ENCODE measurements at regions of chr17 and their contacts with region 1.

Region 1: GRCh38 chr17:77372444-77373298 is 231.9 kb downstream of the SEC14L1 start:
- DNase-seq: peak; percentile 36 to 74 (median 60)
- ATAC-seq: peak; percentile 26 to 32
- H3K4me3 Mint-ChIP-seq: peak overlapping the region; percentile 73 to 92 (median 84)
- H3K27ac Mint-ChIP-seq: peak overlapping the region; percentile 74 to 92 (median 87)
- H3K4me1 Mint-ChIP-seq: peaks cover 50 to 77% (median 61%) of the 10 kb centered on the region in 4 donors
- H3K27me3 Mint-ChIP-seq: peaks cover 0 to 1% (median 0%) of the 10 kb centered on the region in 5 donors

Region 2: GRCh38 chr17:77280980-77281903 is 91.4 kb before region 1 on chr17:
- POLR2A ChIA-PET with region 1: no interaction called
- DNase-seq: peak; percentile 54 to 77 (median 71)
- ATAC-seq: peak; percentile 95 to 96
- H3K4me3 Mint-ChIP-seq: peak overlapping the region; percentile 67 to 84 (median 78)
- H3K27ac Mint-ChIP-seq: peak overlapping the region in 7 of 10 donors; percentile 35 to 99 (median 77)
- H3K4me1 Mint-ChIP-seq: peaks cover 12 to 25% (median 16%) of the 10 kb centered on the region in 4 donors
- H3K27me3 Mint-ChIP-seq: peaks cover 0 to 16% (median 8%) of the 10 kb centered on the region in 5 donors

Region 3: GRCh38 chr17:77331301-77331864 is 41.3 kb before region 1 on chr17:
- POLR2A ChIA-PET with region 1: interaction called, 70 read pairs
- DNase-seq: peak; percentile 88 to 97 (median 95)
- ATAC-seq: peak; percentile 80 to 89
- H3K4me3 Mint-ChIP-seq: peak overlapping the region; percentile 71 to 90 (median 84)
- H3K27ac Mint-ChIP-seq: peak overlapping the region; percentile 84 to 97 (median 91)
- H3K4me1 Mint-ChIP-seq: peaks cover 23 to 52% (median 47%) of the 10 kb centered on the region in 4 donors
- H3K27me3 Mint-ChIP-seq: peaks cover 0 to 2% (median 0%) of the 10 kb centered on the region in 5 donors

Region 4: GRCh38 chr17:77382966-77383612 is 10.4 kb after region 1 on chr17:
- POLR2A ChIA-PET with region 1: interaction called, 143 read pairs
- DNase-seq: no peak
- ATAC-seq: peak; percentile 7 to 9
- H3K4me3 Mint-ChIP-seq: peak overlapping the region in 9 of 10 donors; percentile 75 to 90 (median 82)
- H3K27ac Mint-ChIP-seq: peak overlapping the region; percentile 75 to 94 (median 90)
- H3K4me1 Mint-ChIP-seq: peaks cover 49 to 94% (median 88%) of the 10 kb centered on the region in 4 donors
- H3K27me3 Mint-ChIP-seq: no peaks in the 10 kb centered on the region

Region 5: DNA sequence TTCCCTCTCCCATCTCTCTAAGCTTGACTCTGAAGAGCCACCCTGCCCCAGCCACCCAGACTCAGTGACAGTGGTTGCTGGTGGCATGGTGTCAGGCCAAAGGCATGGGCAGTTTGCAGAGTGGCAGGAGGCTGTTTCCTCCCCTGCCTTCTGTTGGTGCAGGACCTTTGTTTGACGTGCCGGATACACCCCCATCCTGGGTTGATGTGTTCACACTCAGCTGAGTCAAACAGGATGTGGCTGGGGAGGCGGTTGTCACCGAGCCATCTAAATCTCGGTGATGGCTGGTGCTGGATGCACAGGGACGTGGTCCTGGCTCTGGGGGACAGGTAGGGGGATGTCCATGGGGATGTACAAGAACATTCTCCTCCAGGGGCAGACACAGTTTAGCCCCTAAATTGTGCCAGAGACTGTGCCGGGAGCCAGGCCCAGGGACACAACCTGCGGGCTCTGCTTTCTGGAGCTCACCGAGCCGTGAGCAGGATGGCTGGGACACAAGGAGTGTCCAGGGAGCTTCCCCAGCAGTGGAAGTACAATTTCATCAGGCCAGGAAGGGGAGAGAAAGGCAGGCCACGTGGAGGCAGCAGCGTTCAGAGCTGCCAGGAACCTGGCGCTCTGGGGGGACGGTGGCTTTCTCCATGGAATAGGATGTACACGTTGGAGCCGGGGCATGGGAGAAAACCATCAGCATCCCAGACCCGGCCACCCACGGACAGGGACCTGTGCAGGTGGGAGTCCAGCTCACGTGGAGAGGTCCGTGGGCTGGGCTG is 32.3 kb after region 1 on chr17:
- POLR2A ChIA-PET with region 1: interaction called, 186 read pairs
- DNase-seq: peak; percentile 48 to 88 (median 81)
- ATAC-seq: peak; percentile 67 to 77
- H3K4me3 Mint-ChIP-seq: peak overlapping the region; percentile 91 to 99 (median 97)
- H3K27ac Mint-ChIP-seq: peak overlapping the region; percentile 93 to 100 (median 98)
- H3K4me1 Mint-ChIP-seq: peaks cover 67 to 99% (median 96%) of the 10 kb centered on the region in 4 donors
- H3K27me3 Mint-ChIP-seq: no peaks in the 10 kb centered on the region

Region 6: GRCh38 chr17:77429919-77430752 is 57.5 kb after region 1 on chr17:
- POLR2A ChIA-PET with region 1: interaction called, 224 read pairs
- DNase-seq: peak; percentile 71 to 92 (median 82)
- ATAC-seq: peak; percentile 18 to 37
- H3K4me3 Mint-ChIP-seq: peak overlapping the region in 9 of 10 donors; percentile 16 to 99 (median 86)
- H3K27ac Mint-ChIP-seq: peak overlapping the region; percentile 80 to 100 (median 97)
- H3K4me1 Mint-ChIP-seq: peaks cover 45 to 94% (median 87%) of the 10 kb centered on the region in 4 donors
- H3K27me3 Mint-ChIP-seq: no peaks in the 10 kb centered on the region

Region 7: GRCh38 chr17:77451245-77451893 is 78.7 kb after region 1 on chr17:
- POLR2A ChIA-PET with region 1: interaction called, 30 read pairs
- DNase-seq: peak in 9 of 10 donors; percentile 60 to 81 (median 68)
- ATAC-seq: peak; percentile 50 to 62
- H3K4me3 Mint-ChIP-seq: peak overlapping the region; percentile 91 to 98 (median 96)
- H3K27ac Mint-ChIP-seq: peak overlapping the region; percentile 92 to 99 (median 99)
- H3K4me1 Mint-ChIP-seq: peaks cover 28 to 67% (median 54%) of the 10 kb centered on the region in 4 donors
- H3K27me3 Mint-ChIP-seq: no peaks in the 10 kb centered on the region

Region 8: DNA sequence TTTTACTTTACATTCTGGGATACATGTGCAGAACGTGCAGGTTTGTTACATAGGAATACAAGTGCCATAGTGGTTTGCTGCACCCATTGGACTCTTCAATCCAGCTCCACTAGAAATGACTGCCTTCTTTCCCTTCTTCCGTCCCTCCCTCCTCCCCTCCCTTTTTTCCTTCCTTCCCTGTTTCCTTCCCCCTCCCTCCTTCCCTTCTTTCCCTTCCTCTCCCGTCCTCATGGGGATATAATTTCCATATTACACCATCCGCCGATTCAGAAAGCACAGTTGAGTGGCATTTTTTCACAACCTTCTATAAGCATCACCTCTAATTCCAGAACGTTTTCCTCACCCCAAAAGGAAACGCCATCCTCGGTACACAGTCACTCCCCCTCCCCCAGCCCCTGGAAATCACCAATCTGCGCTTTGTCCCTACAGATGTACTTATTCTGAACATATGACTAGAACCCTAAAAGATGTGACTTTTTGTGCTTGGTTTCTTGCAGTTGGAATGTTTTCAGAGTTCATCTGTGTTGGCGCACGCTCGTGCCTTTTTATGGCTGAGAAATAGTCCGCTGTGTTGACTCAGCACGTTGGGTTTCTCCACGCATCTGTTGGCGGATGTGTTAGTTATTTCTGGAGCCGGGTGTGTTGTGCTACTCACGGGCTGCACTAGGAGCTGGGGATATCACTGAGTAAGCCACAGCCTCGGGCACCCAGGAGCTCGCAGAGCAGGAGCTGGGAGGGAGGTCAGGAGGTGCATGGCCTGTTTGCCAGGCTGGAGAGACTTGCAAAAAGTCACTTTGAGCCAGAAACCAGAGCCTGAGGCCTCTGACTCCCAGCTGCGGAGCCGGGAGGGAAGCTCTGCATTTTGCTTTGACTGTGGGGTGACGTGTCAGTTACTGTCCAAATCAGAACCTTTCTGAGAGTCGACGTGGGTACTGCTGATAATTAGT is 104.5 kb after region 1 on chr17:
- POLR2A ChIA-PET with region 1: interaction called, 16 read pairs
- DNase-seq: no peak
- ATAC-seq: no peak
- H3K4me3 Mint-ChIP-seq: peak overlapping the region; percentile 31 to 81 (median 73)
- H3K27ac Mint-ChIP-seq: peak overlapping the region; percentile 87 to 98 (median 94)
- H3K4me1 Mint-ChIP-seq: peaks cover 57 to 87% (median 85%) of the 10 kb centered on the region in 4 donors
- H3K27me3 Mint-ChIP-seq: no peaks in the 10 kb centered on the region